K562 (cell line): ENCODE measurements at regions of chr3 and their contacts with region 1.

Region 1: GRCh38 chr3:194472290-194472920 is 14.4 kb downstream of the ATP13A3 start:
- DNase-seq: peak; percentile 29 to 67 (median 36)
- ATAC-seq: peak; percentile 81
- H3K4me3 ChIP-seq: no peak overlapping the region
- H3K27ac ChIP-seq: no peak overlapping the region
- H3K4me1 ChIP-seq: peaks cover 0 to 19% of the 10 kb centered on the region in 2 experiments; a peak in 4 of 5 replicates
- H3K27me3 ChIP-seq: no peaks in the 10 kb centered on the region
- CTCF ChIP-seq: peak; percentile 78 to 98 (median 86)
- EP300 ChIP-seq: no peak
- POLR2A ChIP-seq: no peak
- RAD21 ChIP-seq: peak; percentile 98

Region 2: GRCh38 chr3:194404365-194405140 is 67.9 kb before region 1 on chr3:
- CTCF ChIA-PET with region 1: no interaction called
- POLR2A ChIA-PET with region 1: no interaction called
- in situ Hi-C with region 1: no loop called
- intact Hi-C with region 1: no loop called
- DNase-seq: peak in 1 of 4 experiments; percentile 73
- ATAC-seq: 0 out of 3 replicates have a peak, but pooled peaks have one; percentile 33
- H3K4me3 ChIP-seq: no peak overlapping the region
- H3K27ac ChIP-seq: no peak overlapping the region
- H3K4me1 ChIP-seq: no peaks in the 10 kb centered on the region; a peak in 2 of 5 replicates
- H3K27me3 ChIP-seq: no peaks in the 10 kb centered on the region
- CTCF ChIP-seq: peak; percentile 46 to 81 (median 58); a peak in 5 of 6 replicates
- EP300 ChIP-seq: no peak
- POLR2A ChIP-seq: no peak
- RAD21 ChIP-seq: peak; percentile 69 to 79

Region 3: GRCh38 chr3:194521514-194522260 is 49.3 kb after region 1 on chr3:
- CTCF ChIA-PET with region 1: no interaction called
- POLR2A ChIA-PET with region 1: no interaction called
- in situ Hi-C with region 1: no loop called
- intact Hi-C with region 1: loop called (anchors 1 kb)
- DNase-seq: no peak
- ATAC-seq: no peak
- H3K4me3 ChIP-seq: no peak overlapping the region
- H3K27ac ChIP-seq: no peak overlapping the region; the same call in 2 of the 3 replicates
- H3K4me1 ChIP-seq: peaks cover 0 to 11% of the 10 kb centered on the region in 2 experiments; a peak in 4 of 5 replicates
- H3K27me3 ChIP-seq: no peaks in the 10 kb centered on the region
- CTCF ChIP-seq: no peak
- EP300 ChIP-seq: no peak
- POLR2A ChIP-seq: no peak
- RAD21 ChIP-seq: no peak

Region 4: DNA sequence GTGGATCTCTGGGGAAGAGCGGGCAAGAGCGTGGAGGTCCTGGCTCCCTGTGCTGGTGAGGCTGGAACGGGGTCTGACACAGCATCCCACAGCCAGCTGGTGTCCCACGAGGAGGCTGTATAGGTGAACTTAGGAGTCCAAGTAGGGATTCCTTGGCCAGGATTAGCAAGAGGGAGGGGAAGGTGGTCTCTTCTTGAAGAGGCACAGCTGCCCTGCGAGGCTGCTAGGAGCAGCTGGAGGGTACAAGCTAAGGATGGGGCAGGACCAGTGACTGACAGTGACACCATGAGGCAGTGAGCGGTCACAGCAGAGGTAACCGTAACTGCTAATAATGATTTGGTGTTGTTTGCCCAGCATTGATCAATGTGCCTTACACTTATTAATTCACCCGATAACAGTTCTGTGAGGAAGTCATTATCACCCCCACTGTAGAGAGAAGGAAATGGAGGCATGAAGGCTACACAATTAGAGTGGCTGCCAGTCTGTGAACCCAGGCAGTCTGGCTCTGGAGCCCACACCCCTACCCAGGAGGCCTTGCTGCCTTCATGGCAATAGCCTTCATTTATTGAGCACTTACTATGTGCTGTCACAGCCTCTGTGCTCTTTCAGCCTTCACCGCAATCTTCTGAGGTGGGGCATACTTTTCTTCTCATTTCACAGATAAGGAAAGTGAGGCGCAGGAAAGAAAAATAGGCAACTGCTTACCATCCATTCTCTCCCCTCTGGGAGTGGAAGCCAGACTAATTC is 101.5 kb after region 1 on chr3:
- CTCF ChIA-PET with region 1: interaction called, 5 read pairs
- POLR2A ChIA-PET with region 1: no interaction called
- in situ Hi-C with region 1: no loop called
- intact Hi-C with region 1: loop called (anchors 1 kb)
- DNase-seq: peak; percentile 33 to 70 (median 56)
- ATAC-seq: peak; percentile 80
- H3K4me3 ChIP-seq: no peak overlapping the region
- H3K27ac ChIP-seq: no peak overlapping the region
- H3K4me1 ChIP-seq: peaks cover 39 to 53% of the 10 kb centered on the region in 2 experiments
- H3K27me3 ChIP-seq: no peaks in the 10 kb centered on the region
- CTCF ChIP-seq: peak; percentile 68 to 78 (median 73)
- EP300 ChIP-seq: no peak
- POLR2A ChIP-seq: no peak
- RAD21 ChIP-seq: peak; percentile 68 to 81

Region 5: GRCh38 chr3:194592798-194593752 is 120.7 kb after region 1 on chr3:
- CTCF ChIA-PET with region 1: interaction called, 23 read pairs
- POLR2A ChIA-PET with region 1: interaction called, 3 read pairs
- in situ Hi-C with region 1: no loop called
- intact Hi-C with region 1: loop called (anchors 1 kb)
- DNase-seq: no peak
- ATAC-seq: no peak
- H3K4me3 ChIP-seq: no peak overlapping the region
- H3K27ac ChIP-seq: no peak overlapping the region
- H3K4me1 ChIP-seq: peaks cover 0 to 5% of the 10 kb centered on the region in 2 experiments; a peak in 2 of 5 replicates
- H3K27me3 ChIP-seq: no peaks in the 10 kb centered on the region
- CTCF ChIP-seq: no peak
- EP300 ChIP-seq: no peak
- POLR2A ChIP-seq: no peak
- RAD21 ChIP-seq: no peak

Region 6: GRCh38 chr3:194632809-194633348 is 160.5 kb after region 1 on chr3:
- CTCF ChIA-PET with region 1: no interaction called
- POLR2A ChIA-PET with region 1: no interaction called
- in situ Hi-C with region 1: no loop called
- intact Hi-C with region 1: loop called (anchors 1 kb)
- DNase-seq: peak; percentile 58 to 79 (median 68)
- ATAC-seq: peak; percentile 74
- H3K4me3 ChIP-seq: peak overlapping the region; percentile 86
- H3K27ac ChIP-seq: peak overlapping the region; percentile 84
- H3K4me1 ChIP-seq: peaks cover 2 to 18% of the 10 kb centered on the region in 2 experiments; a peak in 3 of 5 replicates
- H3K27me3 ChIP-seq: no peaks in the 10 kb centered on the region; a peak in 1 of 5 replicates
- CTCF ChIP-seq: no peak
- EP300 ChIP-seq: no peak
- POLR2A ChIP-seq: no peak
- RAD21 ChIP-seq: no peak

Region 7: GRCh38 chr3:195716865-195717210 is 1244.4 kb after region 1 on chr3:
- CTCF ChIA-PET with region 1: no interaction called
- POLR2A ChIA-PET with region 1: no interaction called
- in situ Hi-C with region 1: no loop called
- intact Hi-C with region 1: no loop called
- DNase-seq: no peak
- ATAC-seq: no peak
- H3K4me3 ChIP-seq: no peak overlapping the region
- H3K27ac ChIP-seq: no peak overlapping the region
- H3K4me1 ChIP-seq: peaks cover 0 to 5% of the 10 kb centered on the region in 2 experiments; a peak in 3 of 5 replicates
- H3K27me3 ChIP-seq: peaks cover 30 to 35% of the 10 kb centered on the region in 2 experiments
- CTCF ChIP-seq: no peak
- EP300 ChIP-seq: no peak
- POLR2A ChIP-seq: no peak
- RAD21 ChIP-seq: no peak